ENCODE measurements at regions of chr20 and their contacts with region 1.

Region 1: DNA sequence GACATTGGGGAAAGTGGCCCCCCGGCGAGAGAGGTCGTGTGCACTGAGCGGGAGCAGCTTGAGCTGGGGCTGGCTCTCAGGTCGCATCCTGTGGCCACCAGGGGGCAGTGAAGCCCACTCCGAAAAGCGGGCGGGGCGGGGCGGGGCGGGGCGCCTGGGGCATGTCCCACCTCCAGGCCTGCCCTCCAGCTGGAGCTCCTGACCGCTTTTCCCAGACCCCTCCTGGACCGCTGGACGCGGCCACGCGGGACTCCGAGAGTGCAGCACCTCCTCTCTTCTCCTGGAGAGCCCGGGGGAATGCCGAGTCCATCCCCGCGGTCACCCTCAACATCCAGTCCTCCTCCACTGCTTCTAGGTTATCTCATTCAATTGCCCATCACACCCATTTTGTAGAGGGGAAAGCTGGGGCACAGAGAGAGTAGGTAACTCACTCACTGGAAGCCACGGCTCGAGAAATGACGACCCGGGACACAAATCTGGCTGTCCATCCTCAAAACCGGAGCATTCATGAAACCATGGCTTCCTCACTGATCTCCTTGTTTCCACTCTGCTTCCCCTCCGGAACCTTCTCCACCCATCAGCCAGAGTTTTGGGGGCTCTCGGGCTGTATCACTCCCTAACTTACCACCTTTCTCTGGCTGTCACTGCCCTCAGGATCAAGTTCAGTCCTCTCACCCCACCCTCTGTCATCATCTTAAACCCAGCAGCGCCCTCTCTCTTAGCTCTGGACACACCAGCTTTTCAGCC is 24.1 kb downstream of the COX4I2 start:
- DNase-seq: peak; percentile 48 to 81 (median 73)
- ATAC-seq: peak; percentile 97
- H3K4me3 ChIP-seq: peak overlapping the region; percentile 54
- H3K4me3 Mint-ChIP-seq: peak overlapping the region; percentile 61 to 89 (median 83)
- H3K27ac ChIP-seq: peak overlapping the region; percentile 69
- H3K27ac Mint-ChIP-seq: peak overlapping the region; percentile 66 to 91 (median 86)
- H3K4me1 ChIP-seq: peaks cover 4 to 17% of the 10 kb centered on the region in 2 donors
- H3K4me1 Mint-ChIP-seq: peaks cover 20 to 50% (median 32%) of the 10 kb centered on the region in 7 donors
- H3K27me3 ChIP-seq: no peaks in the 10 kb centered on the region
- H3K27me3 Mint-ChIP-seq: no peaks in the 10 kb centered on the region

Region 2: GRCh38 chr20:31674895-31675827 is 13.4 kb after region 1 on chr20:
- CTCF ChIA-PET with region 1: interaction called, 14 read pairs
- POLR2A ChIA-PET with region 1: interaction called, 5 read pairs
- intact Hi-C with region 1: loop called (anchors 1 kb)
- DNase-seq: peak; percentile 31 to 65 (median 57)
- ATAC-seq: peak; percentile 85
- H3K4me3 ChIP-seq: peak overlapping the region; percentile 88
- H3K4me3 Mint-ChIP-seq: peak overlapping the region; percentile 86 to 100 (median 96)
- H3K27ac ChIP-seq: peak overlapping the region; percentile 84
- H3K27ac Mint-ChIP-seq: peak overlapping the region; percentile 87 to 100 (median 96)
- H3K4me1 ChIP-seq: peaks cover 53 to 63% of the 10 kb centered on the region in 2 donors
- H3K4me1 Mint-ChIP-seq: peaks cover 56 to 87% (median 65%) of the 10 kb centered on the region in 7 donors
- H3K27me3 ChIP-seq: no peaks in the 10 kb centered on the region
- H3K27me3 Mint-ChIP-seq: no peaks in the 10 kb centered on the region

Region 3: GRCh38 chr20:31698803-31699718 is 37.3 kb after region 1 on chr20:
- CTCF ChIA-PET with region 1: no interaction called
- POLR2A ChIA-PET with region 1: no interaction called
- intact Hi-C with region 1: loop called in 1 of 2 experiments (anchors 2 kb)
- DNase-seq: no peak
- ATAC-seq: peak; percentile 80
- H3K4me3 ChIP-seq: no peak overlapping the region
- H3K4me3 Mint-ChIP-seq: peak overlapping the region in 1 of 10 donors; percentile 82
- H3K27ac ChIP-seq: peak overlapping the region; percentile 33
- H3K27ac Mint-ChIP-seq: peak overlapping the region; percentile 39 to 91 (median 73)
- H3K4me1 ChIP-seq: peaks cover 15 to 18% of the 10 kb centered on the region in 2 donors
- H3K4me1 Mint-ChIP-seq: peaks cover 40 to 61% (median 51%) of the 10 kb centered on the region in 7 donors
- H3K27me3 ChIP-seq: no peaks in the 10 kb centered on the region
- H3K27me3 Mint-ChIP-seq: no peaks in the 10 kb centered on the region

Region 4: GRCh38 chr20:31712564-31713311 is 50.9 kb after region 1 on chr20:
- CTCF ChIA-PET with region 1: interaction called, 23 read pairs
- POLR2A ChIA-PET with region 1: no interaction called
- intact Hi-C with region 1: no loop called
- DNase-seq: no peak
- ATAC-seq: no peak
- H3K4me3 ChIP-seq: no peak overlapping the region
- H3K4me3 Mint-ChIP-seq: peak overlapping the region in 3 of 10 donors; percentile 0 to 50 (median 0)
- H3K27ac ChIP-seq: peak overlapping the region; percentile 27
- H3K27ac Mint-ChIP-seq: peak overlapping the region; percentile 20 to 79 (median 53)
- H3K4me1 ChIP-seq: peaks cover 16 to 54% of the 10 kb centered on the region in 2 donors
- H3K4me1 Mint-ChIP-seq: peaks cover 52 to 90% (median 85%) of the 10 kb centered on the region in 7 donors
- H3K27me3 ChIP-seq: no peaks in the 10 kb centered on the region
- H3K27me3 Mint-ChIP-seq: no peaks in the 10 kb centered on the region

Region 5: GRCh38 chr20:32018269-32019074 is 356.7 kb after region 1 on chr20:
- CTCF ChIA-PET with region 1: no interaction called
- POLR2A ChIA-PET with region 1: no interaction called
- intact Hi-C with region 1: loop called in 1 of 2 experiments (anchors 10 kb)
- DNase-seq: peak in 8 of 9 donors; percentile 17 to 59 (median 36)
- ATAC-seq: peak; percentile 61
- H3K4me3 ChIP-seq: peak overlapping the region; percentile 48
- H3K4me3 Mint-ChIP-seq: peak overlapping the region; percentile 54 to 91 (median 82)
- H3K27ac ChIP-seq: no peak overlapping the region
- H3K27ac Mint-ChIP-seq: no peak overlapping the region
- H3K4me1 ChIP-seq: peaks cover 0 to 6% of the 10 kb centered on the region in 2 donors
- H3K4me1 Mint-ChIP-seq: peaks cover 10 to 28% (median 23%) of the 10 kb centered on the region in 7 donors
- H3K27me3 ChIP-seq: peaks cover 0 to 3% of the 10 kb centered on the region in 2 donors
- H3K27me3 Mint-ChIP-seq: peaks cover 66 to 81% (median 70%) of the 10 kb centered on the region in 5 donors